Mammary epithelial cell (primary cell): ENCODE measurements at regions of chr20 and their contacts with region 1.

Region 1: DNA sequence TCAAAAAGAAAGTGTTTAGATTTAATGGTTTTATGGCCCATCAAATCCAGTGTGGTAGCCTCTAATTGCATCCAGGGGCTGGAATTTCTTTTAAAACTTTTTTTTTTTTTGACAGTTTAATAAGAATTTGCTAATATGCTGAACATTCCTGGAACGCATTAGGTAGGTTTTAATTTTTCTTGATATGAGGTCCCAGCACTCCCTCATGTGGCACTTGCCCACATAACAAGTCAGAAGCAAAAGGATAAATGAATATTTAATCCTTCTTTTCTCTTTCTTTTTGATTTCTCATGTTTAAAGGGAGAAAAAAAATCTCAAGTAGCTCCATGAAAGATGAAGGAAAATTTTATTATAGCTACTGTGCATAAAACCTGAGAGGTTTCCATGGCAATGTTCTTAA is 13.5 kb downstream of the HAO1 start:
- DNase-seq: no peak
- H3K4me3 ChIP-seq: no peak overlapping the region
- H3K27ac ChIP-seq: no peak overlapping the region
- H3K4me1 ChIP-seq: peaks cover 23% of the 10 kb centered on the region
- H3K27me3 ChIP-seq: no peaks in the 10 kb centered on the region
- CTCF ChIP-seq: peak; percentile 67 to 75

Region 2: DNA sequence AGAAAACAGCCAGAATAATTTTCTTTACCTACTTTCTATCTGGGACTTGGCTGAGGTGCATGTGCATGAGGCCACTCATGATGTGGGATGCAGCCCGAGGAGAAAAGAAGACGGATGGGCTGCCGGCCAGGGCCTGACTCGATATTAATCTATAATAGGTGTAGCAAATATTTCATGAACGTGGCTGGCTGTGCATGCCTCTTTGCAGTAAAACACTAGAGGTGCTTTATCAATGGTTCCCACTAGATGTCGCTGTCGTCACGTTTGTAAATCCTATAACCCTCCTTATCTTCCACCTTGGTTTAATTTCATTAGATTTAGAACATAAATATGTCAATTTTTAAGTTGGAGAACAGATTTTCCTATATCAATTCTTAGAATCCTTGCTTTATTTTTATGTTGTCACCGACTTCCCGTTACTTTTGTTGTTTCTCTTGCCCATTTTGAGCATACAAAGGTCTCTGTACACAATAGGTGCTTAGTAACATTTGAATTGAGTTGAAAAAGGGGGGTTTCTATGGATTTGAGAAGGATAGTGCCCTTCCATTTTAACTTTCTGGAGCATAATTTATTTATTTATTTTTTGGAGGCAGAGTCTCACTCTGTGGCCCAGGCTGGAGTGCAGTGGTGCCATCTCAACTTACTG is 1784.3 kb before region 1 on chr20:
- CTCF ChIA-PET with region 1: no interaction called
- dilution Hi-C with region 1: no loop called
- in situ Hi-C with region 1: no loop called
- intact Hi-C with region 1: loop called (anchors 10 kb)
- DNase-seq: peak; percentile 36
- H3K4me3 ChIP-seq: no peak overlapping the region
- H3K27ac ChIP-seq: no peak overlapping the region
- H3K4me1 ChIP-seq: no peaks in the 10 kb centered on the region
- H3K27me3 ChIP-seq: no peaks in the 10 kb centered on the region
- CTCF ChIP-seq: peak; percentile 76 to 88

Region 3: DNA sequence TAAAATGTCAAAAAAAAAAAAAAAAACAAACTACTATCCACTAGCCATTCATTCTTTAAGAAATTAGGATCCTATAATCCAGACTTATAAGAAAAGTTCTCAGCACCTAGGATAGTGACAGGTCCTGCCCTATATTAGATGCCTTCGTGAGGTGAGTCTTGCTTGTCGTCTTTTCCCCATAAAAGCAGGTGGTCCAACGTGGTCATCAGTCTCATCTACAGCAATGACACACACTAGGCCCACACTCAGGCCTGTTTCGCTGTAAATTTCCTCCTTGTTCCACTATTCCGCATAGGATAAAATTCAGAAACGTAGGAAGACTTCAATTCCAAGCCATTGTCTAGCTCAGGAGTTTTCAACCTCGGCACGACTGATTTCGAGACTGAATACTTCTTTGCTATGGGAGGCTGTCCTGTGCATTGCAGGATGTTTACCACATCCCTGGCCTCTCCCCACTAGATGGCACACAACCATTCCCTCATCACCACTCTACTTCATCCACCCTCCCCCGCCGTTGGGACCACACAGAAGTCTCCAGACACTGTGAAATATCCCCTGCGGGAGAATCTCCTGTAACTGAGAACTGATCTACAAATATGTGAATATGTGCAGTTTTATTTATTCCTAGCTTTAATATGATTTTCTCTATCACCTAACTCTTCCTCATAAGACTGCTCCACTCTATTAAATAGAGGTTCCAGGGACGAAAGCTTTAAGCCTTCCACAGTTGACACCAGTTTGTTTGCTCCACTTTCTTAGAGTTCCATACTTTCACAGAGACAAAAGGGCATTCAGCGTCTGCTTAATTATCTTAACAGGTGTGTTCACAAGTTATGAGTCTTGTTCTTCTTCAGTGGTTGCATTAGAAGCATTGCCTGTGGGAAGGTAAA is 812.9 kb before region 1 on chr20:
- CTCF ChIA-PET with region 1: no interaction called
- dilution Hi-C with region 1: no loop called
- in situ Hi-C with region 1: no loop called
- intact Hi-C with region 1: loop called (anchors 5 kb)
- DNase-seq: peak; percentile 43
- H3K4me3 ChIP-seq: no peak overlapping the region
- H3K27ac ChIP-seq: no peak overlapping the region
- H3K4me1 ChIP-seq: no peaks in the 10 kb centered on the region
- H3K27me3 ChIP-seq: no peaks in the 10 kb centered on the region
- CTCF ChIP-seq: peak; percentile 52 to 76

Region 4: DNA sequence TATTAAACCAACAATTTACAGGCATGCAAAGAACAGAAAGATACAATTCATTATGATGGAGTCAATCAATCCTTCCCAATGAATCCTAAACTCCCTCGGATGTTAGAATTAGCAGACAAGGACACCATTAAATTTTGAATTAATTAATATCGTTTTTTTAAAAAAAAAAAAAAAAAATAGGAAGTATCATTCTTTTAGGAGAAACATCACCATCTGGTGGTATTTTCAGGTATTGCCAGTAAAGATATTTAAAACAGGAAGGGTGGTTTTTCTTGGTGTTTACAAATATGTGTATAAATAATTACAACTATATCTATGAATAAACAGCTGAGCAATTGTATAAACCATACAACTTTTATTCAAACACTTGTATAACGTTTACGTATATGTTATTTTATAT is 550.9 kb before region 1 on chr20:
- CTCF ChIA-PET with region 1: no interaction called
- dilution Hi-C with region 1: no loop called
- in situ Hi-C with region 1: no loop called
- intact Hi-C with region 1: loop called (anchors 2 kb)
- DNase-seq: no peak
- H3K4me3 ChIP-seq: no peak overlapping the region
- H3K27ac ChIP-seq: no peak overlapping the region
- H3K4me1 ChIP-seq: peaks cover 13% of the 10 kb centered on the region
- H3K27me3 ChIP-seq: no peaks in the 10 kb centered on the region
- CTCF ChIP-seq: peak; percentile 53 to 55

Region 5: GRCh38 chr20:8019246-8019997 is 92.7 kb after region 1 on chr20 and contains the start of gene TMX4:
- CTCF ChIA-PET with region 1: no interaction called
- dilution Hi-C with region 1: no loop called
- in situ Hi-C with region 1: loop called in 1 of 2 experiments (anchors 25 kb)
- intact Hi-C with region 1: no loop called
- DNase-seq: peak; percentile 94
- H3K4me3 ChIP-seq: peak within 1 kb of the TSS; percentile 80 to 85 (median 85)
- H3K27ac ChIP-seq: peak within 1 kb of the TSS; percentile 84
- H3K4me1 ChIP-seq: peaks cover 17% of the 10 kb centered on the region
- H3K27me3 ChIP-seq: no peaks in the 10 kb centered on the region
- CTCF ChIP-seq: peak; percentile 4 to 39
- total RNA-seq, gene TMX4: 30.2 to 38.3 TPM